CD8-positive, alpha-beta T cell (primary cell): ENCODE measurements at regions of chr4 and their contacts with region 1.

Region 1: GRCh38 chr4:112266821-112267220 is 18.9 kb downstream of the TIFA start:
- DNase-seq: peak in 2 of 9 experiments; percentile 41 to 52
- ATAC-seq: peak; percentile 36
- H3K4me3 ChIP-seq: no peak overlapping the region
- H3K4me3 Mint-ChIP-seq: no peak overlapping the region
- H3K27ac ChIP-seq: no peak overlapping the region
- H3K27ac Mint-ChIP-seq: no peak overlapping the region
- H3K4me1 ChIP-seq: no peaks in the 10 kb centered on the region
- H3K4me1 Mint-ChIP-seq: no peaks in the 10 kb centered on the region
- H3K27me3 ChIP-seq: no peaks in the 10 kb centered on the region
- H3K27me3 Mint-ChIP-seq: no peaks in the 10 kb centered on the region
- CTCF ChIP-seq: peak; percentile 39

Region 2: GRCh38 chr4:112321776-112322684 is 55.2 kb after region 1 on chr4:
- CTCF ChIA-PET with region 1: interaction called, 7 read pairs
- POLR2A ChIA-PET with region 1: no interaction called
- intact Hi-C with region 1: loop called in 1 of 2 experiments (anchors 5 kb)
- DNase-seq: peak; percentile 58 to 85 (median 76)
- ATAC-seq: peak; percentile 99
- H3K4me3 ChIP-seq: no peak overlapping the region
- H3K4me3 Mint-ChIP-seq: no peak overlapping the region
- H3K27ac ChIP-seq: no peak overlapping the region
- H3K27ac Mint-ChIP-seq: no peak overlapping the region
- H3K4me1 ChIP-seq: peaks cover 10% of the 10 kb centered on the region
- H3K4me1 Mint-ChIP-seq: peaks cover 5% of the 10 kb centered on the region
- H3K27me3 ChIP-seq: no peaks in the 10 kb centered on the region
- H3K27me3 Mint-ChIP-seq: no peaks in the 10 kb centered on the region
- CTCF ChIP-seq: peak; percentile 96